ENCODE measurements at regions of chr11 and their contacts with region 1.

Region 1: GRCh38 chr11:123995119-123995518 is at the start of gene OR10G6:
- DNase-seq: no peak
- ATAC-seq: no peak
- H3K4me3 ChIP-seq: no peak within 1 kb of the TSS
- H3K27ac ChIP-seq: no peak within 1 kb of the TSS
- H3K4me1 ChIP-seq: no peaks in the 10 kb centered on the region
- H3K27me3 ChIP-seq: no peaks in the 10 kb centered on the region
- CTCF ChIP-seq: no peak
- total RNA-seq, gene OR10G6: not detected

Region 2: DNA sequence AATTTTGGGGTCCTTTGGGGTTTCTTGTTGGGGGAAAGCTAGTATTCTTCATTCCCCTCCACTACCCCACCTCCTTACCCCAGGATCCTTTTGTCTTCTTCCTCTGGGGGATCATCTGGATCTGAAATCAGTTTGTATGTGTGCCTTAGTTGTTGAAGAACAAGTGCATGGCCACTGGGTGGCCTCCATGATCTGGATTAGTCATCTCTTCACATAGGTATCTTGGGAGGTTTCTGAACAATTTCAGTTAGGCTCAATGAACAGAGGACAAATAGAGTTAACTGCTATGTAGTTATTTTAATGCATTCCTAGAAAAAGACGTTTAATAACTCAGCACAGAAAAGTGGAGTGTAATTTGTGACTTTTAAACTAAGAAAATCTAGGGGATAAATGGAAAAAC is 113.0 kb after region 1 on chr11:
- intact Hi-C with region 1: no loop called
- DNase-seq: no peak
- ATAC-seq: no peak
- H3K4me3 ChIP-seq: no peak overlapping the region
- H3K27ac ChIP-seq: no peak overlapping the region
- H3K4me1 ChIP-seq: peaks cover 0 to 9% (median 0%) of the 10 kb centered on the region in 9 donors
- H3K27me3 ChIP-seq: peaks cover 0 to 11% (median 0%) of the 10 kb centered on the region in 7 donors
- CTCF ChIP-seq: peak in 1 of 9 donors; percentile 22

Region 3: GRCh38 chr11:125036933-125037332 is 1041.8 kb after region 1 on chr11:
- intact Hi-C with region 1: loop called in 1 of 10 experiments (anchors 5 kb)
- DNase-seq: no peak
- ATAC-seq: no peak
- H3K4me3 ChIP-seq: no peak overlapping the region
- H3K27ac ChIP-seq: no peak overlapping the region
- H3K4me1 ChIP-seq: no peaks in the 10 kb centered on the region
- H3K27me3 ChIP-seq: no peaks in the 10 kb centered on the region
- CTCF ChIP-seq: no peak